ENCODE measurements at regions of chr6 and their contacts with region 1.

Region 1: DNA sequence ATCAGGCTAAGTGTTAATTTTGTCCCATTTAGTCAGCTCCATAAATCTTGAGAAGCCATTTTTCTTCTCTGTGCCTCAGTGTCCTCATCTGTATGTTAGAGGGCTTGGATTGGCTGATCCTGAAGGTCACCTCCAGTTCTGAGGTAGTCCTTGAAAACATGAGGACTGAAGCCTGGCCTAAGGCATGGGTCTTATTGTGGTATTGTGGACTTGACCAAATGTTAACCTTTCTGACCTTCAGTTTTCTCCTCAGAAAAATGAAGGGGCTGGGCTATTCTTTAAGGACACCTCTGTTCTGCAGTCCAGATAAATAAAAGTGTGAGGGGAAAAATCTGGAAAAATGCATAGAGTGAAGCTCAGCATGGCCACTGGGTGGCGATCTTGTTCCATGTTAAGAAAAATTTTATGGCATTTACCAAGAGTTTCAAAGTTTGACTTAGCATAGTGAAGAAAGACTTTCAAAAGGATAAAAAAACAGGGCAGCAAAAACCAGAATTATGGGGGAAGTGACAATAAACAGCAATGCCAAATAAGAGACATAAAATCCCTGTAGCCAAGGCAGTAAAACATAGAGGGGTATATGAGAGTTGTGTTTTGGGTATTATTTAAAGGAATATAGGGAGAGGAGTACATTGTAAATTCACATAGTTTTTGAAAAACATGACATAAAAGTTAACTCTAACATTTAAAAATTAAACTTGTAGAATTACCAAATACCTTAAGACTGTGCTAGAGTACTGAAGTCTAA is 13.2 kb upstream of the TFB1M start:
- DNase-seq: peak; percentile 71
- H3K4me3 Mint-ChIP-seq: no peak overlapping the region
- H3K27ac Mint-ChIP-seq: peak overlapping the region; percentile 44
- H3K4me1 Mint-ChIP-seq: peaks cover 13% of the 10 kb centered on the region
- H3K27me3 Mint-ChIP-seq: no peaks in the 10 kb centered on the region

Region 2: DNA sequence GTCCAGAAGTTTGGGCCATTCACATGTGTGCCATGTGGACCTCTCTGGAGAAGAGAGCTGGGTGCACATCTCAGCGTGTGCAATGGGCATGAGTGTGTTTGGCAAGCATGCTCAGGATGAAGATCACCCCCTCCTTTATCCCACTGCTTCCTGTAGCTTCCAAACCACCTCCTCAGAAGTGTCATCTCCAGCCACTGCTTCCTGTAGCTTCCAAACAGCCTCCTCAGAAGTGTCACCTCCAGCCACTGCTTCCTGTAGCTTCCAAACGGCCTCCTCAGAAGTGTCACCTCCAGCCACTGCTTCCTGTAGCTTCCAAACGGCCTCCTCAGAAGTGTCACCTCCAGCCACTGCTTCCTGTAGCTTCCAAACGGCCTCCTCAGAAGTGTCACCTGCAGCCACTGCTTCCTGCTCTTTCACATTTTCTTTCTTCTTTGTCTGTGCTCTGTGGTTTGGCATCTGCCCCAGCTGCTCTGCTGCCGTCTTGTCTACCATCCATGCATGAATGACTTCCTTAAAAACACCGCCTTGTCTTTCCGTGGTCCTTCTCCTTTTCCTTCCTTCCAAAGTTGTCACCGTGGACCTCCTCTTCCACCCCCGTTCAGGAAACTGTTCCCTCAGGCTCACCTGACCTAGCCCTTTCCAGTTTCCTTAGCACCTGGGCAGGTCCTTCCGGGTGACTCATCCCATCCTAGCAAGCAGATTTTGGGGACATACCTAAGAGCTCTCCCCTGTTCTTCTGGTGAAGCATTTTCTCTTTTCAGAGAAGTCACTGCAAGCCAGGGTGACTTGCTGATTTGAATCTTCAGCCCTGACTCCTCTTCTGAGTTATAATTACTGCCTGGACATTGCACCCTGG is 375.9 kb before region 1 on chr6:
- CTCF ChIA-PET with region 1: no interaction called
- POLR2A ChIA-PET with region 1: no interaction called
- intact Hi-C with region 1: no loop called
- DNase-seq: peak; percentile 41
- H3K4me3 Mint-ChIP-seq: peak overlapping the region; percentile 7
- H3K27ac Mint-ChIP-seq: peak overlapping the region; percentile 38
- H3K4me1 Mint-ChIP-seq: peaks cover 22% of the 10 kb centered on the region
- H3K27me3 Mint-ChIP-seq: no peaks in the 10 kb centered on the region

Region 3: GRCh38 chr6:155154158-155154830 is 173.2 kb before region 1 on chr6:
- CTCF ChIA-PET with region 1: no interaction called
- POLR2A ChIA-PET with region 1: no interaction called
- intact Hi-C with region 1: no loop called
- DNase-seq: peak; percentile 64
- H3K4me3 Mint-ChIP-seq: peak overlapping the region; percentile 1
- H3K27ac Mint-ChIP-seq: peak overlapping the region; percentile 93
- H3K4me1 Mint-ChIP-seq: peaks cover 73% of the 10 kb centered on the region
- H3K27me3 Mint-ChIP-seq: no peaks in the 10 kb centered on the region

Region 4: GRCh38 chr6:155493694-155494143 is 166.2 kb after region 1 on chr6:
- CTCF ChIA-PET with region 1: interaction called, 11 read pairs
- POLR2A ChIA-PET with region 1: no interaction called
- intact Hi-C with region 1: no loop called
- DNase-seq: peak; percentile 62
- H3K4me3 Mint-ChIP-seq: no peak overlapping the region
- H3K27ac Mint-ChIP-seq: peak overlapping the region; percentile 34
- H3K4me1 Mint-ChIP-seq: peaks cover 33% of the 10 kb centered on the region
- H3K27me3 Mint-ChIP-seq: no peaks in the 10 kb centered on the region

Region 5: DNA sequence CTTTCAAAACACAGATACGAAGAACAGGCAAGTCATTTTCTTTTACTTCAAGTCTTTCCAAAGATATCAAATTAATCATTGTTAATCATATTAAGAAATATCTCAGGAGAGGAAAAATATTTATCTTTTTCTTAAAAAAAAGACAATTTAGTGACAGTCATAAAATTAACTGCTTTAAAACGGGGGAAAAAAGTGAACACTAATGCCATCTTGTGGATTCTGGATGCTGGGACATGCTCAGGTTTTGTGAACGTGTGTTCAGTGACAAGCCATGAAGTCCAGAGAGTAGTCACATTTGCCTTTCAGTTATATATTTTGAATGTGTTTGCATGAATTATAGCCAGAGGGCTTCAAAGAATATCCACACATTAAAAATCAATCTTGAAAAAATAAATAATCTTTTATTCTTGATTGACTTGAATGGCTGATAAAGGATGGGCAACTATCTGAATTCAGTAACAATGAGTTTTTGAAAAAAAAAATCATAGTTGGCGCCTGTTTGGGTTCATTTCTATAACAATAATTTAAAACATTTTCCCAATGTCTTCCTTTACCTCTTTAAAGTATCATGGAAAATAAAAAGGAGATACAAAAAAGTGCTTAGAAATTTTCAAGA is 202.8 kb after region 1 on chr6:
- CTCF ChIA-PET with region 1: interaction called, 24 read pairs
- POLR2A ChIA-PET with region 1: no interaction called
- intact Hi-C with region 1: loop called (anchors 1 kb)
- DNase-seq: peak; percentile 21
- H3K4me3 Mint-ChIP-seq: no peak overlapping the region
- H3K27ac Mint-ChIP-seq: no peak overlapping the region
- H3K4me1 Mint-ChIP-seq: peaks cover 11% of the 10 kb centered on the region
- H3K27me3 Mint-ChIP-seq: peaks cover 4% of the 10 kb centered on the region

Region 6: GRCh38 chr6:155628306-155628705 is 300.8 kb after region 1 on chr6:
- CTCF ChIA-PET with region 1: no interaction called
- POLR2A ChIA-PET with region 1: no interaction called
- intact Hi-C with region 1: loop called (anchors 2 kb)
- DNase-seq: peak; percentile 85
- H3K4me3 Mint-ChIP-seq: peak overlapping the region; percentile 8
- H3K27ac Mint-ChIP-seq: peak overlapping the region; percentile 95
- H3K4me1 Mint-ChIP-seq: peaks cover 18% of the 10 kb centered on the region
- H3K27me3 Mint-ChIP-seq: peaks cover 1% of the 10 kb centered on the region

Region 7: GRCh38 chr6:155882527-155883333 is 555.2 kb after region 1 on chr6:
- CTCF ChIA-PET with region 1: no interaction called
- POLR2A ChIA-PET with region 1: no interaction called
- intact Hi-C with region 1: no loop called
- DNase-seq: no peak
- H3K4me3 Mint-ChIP-seq: no peak overlapping the region
- H3K27ac Mint-ChIP-seq: no peak overlapping the region
- H3K4me1 Mint-ChIP-seq: peaks cover 22% of the 10 kb centered on the region
- H3K27me3 Mint-ChIP-seq: no peaks in the 10 kb centered on the region

Measured in activated CD4-positive, alpha-beta memory T cell treated with anti-CD3 and anti-CD28 coated beads for 36 hours (primary cell).